Prostate gland (tissue), 2 donors: ENCODE measurements at regions of chr15 and their contacts with region 1.

Region 1: GRCh38 chr15:77496710-77497103 is 76.0 kb downstream of the HMG20A start:
- DNase-seq: peak; percentile 67
- H3K4me3 ChIP-seq: no peak overlapping the region
- H3K27ac ChIP-seq: peak overlapping the region; percentile 27 to 65
- H3K4me1 ChIP-seq: peaks cover 13% of the 10 kb centered on the region
- H3K27me3 ChIP-seq: no peaks in the 10 kb centered on the region
- CTCF ChIP-seq: peak; percentile 70 to 79 (median 76)
- POLR2A ChIP-seq: no peak

Region 2: GRCh38 chr15:77118882-77119321 is 377.8 kb before region 1 on chr15:
- intact Hi-C with region 1: loop called (anchors 2 kb)
- DNase-seq: peak; percentile 42
- H3K4me3 ChIP-seq: no peak overlapping the region
- H3K27ac ChIP-seq: no peak overlapping the region
- H3K4me1 ChIP-seq: no peaks in the 10 kb centered on the region
- H3K27me3 ChIP-seq: no peaks in the 10 kb centered on the region
- CTCF ChIP-seq: peak in 3 of 4 experiments; percentile 58 to 82 (median 70)
- POLR2A ChIP-seq: no peak

Region 3: DNA sequence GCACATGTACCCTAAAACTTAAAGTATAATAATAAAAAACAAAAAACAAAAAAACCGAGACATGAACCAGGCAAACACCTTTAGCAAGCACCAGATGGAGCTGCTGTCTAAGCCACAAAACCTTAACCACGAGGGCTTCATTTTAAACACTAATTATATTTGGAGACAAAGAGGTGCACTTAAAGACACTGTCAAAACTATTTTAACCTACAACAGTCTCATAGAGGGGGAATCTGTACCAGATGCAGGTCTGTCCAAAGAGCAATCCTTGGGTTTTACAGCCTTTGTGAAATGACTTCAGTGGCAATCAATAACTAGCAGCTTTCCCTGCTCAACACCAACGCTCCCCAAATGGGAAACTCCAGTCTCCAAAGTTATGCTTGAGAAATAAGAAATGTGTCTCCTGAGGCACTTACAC is 310.1 kb before region 1 on chr15:
- intact Hi-C with region 1: loop called (anchors 5 kb)
- DNase-seq: no peak
- H3K4me3 ChIP-seq: no peak overlapping the region
- H3K27ac ChIP-seq: no peak overlapping the region
- H3K4me1 ChIP-seq: no peaks in the 10 kb centered on the region
- H3K27me3 ChIP-seq: no peaks in the 10 kb centered on the region
- CTCF ChIP-seq: peak; percentile 13 to 56 (median 34)
- POLR2A ChIP-seq: no peak

Region 4: DNA sequence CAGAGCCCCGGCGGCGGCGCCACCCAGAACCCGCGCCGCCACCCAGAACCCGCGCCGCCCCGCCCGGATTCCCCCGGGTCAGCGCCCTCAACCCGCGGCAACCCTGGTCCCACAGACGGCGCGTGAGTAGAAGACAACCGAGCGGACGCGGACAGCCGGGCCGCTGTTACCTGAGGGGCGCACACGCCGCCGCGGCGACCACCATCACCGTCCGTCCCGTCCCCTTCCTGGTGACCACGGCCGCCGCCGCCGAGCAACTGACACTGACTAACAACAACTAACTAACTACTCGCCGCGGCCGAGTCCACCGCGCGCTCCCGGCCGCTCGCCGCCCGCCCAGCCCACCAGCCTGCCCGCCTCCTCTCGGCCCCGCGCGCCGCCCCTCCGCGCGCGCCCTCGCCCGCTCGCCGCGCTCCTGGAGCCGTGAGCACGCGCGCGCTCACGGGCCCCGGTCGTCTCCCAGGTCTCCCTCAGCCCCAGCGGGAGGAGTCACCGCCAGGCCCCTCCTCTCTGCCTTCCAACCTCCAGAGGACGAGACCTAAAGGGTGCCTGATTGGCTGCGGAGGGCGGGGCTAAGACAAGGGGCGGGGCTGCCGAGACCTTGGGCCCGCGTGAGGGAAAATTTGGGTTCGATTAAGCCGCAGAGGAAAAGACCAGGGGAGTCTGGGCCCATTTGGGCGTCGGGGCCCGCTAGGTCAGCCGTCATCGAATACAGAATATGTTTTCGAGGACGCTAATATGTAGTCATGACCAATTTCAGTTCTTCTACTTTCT is 76.7 kb before region 1 on chr15 and contains the start of gene PEAK1:
- intact Hi-C with region 1: loop called (anchors 2 kb)
- DNase-seq: peak; percentile 99
- H3K4me3 ChIP-seq: peak within 1 kb of the TSS; percentile 65 to 81
- H3K27ac ChIP-seq: peak within 1 kb of the TSS; percentile 89 to 91
- H3K4me1 ChIP-seq: no peaks in the 10 kb centered on the region
- H3K27me3 ChIP-seq: no peaks in the 10 kb centered on the region
- CTCF ChIP-seq: no peak
- POLR2A ChIP-seq: peak; percentile 74
- total RNA-seq, gene PEAK1: 11.3 to 108 TPM

Region 5: GRCh38 chr15:77568973-77569728 is 72.4 kb after region 1 on chr15:
- intact Hi-C with region 1: no loop called
- DNase-seq: peak; percentile 53
- H3K4me3 ChIP-seq: peak overlapping the region; percentile 7 to 9
- H3K27ac ChIP-seq: peak overlapping the region; percentile 20 to 23
- H3K4me1 ChIP-seq: no peaks in the 10 kb centered on the region
- H3K27me3 ChIP-seq: no peaks in the 10 kb centered on the region
- CTCF ChIP-seq: no peak
- POLR2A ChIP-seq: no peak